ENCODE measurements at regions of chr3 and their contacts with region 1.

Region 1: GRCh38 chr3:112814266-112814665 is 32.4 kb downstream of the CD200R1L start:
- DNase-seq: no peak
- ATAC-seq: peak in 3 of 4 donors; percentile 40 to 55 (median 47)
- H3K4me3 ChIP-seq: no peak overlapping the region
- H3K27ac ChIP-seq: peak overlapping the region in 2 of 12 donors; percentile 62 to 81
- H3K4me1 ChIP-seq: peaks cover 0 to 49% (median 5%) of the 10 kb centered on the region in 12 donors
- H3K27me3 ChIP-seq: peaks cover 0 to 5% (median 0%) of the 10 kb centered on the region in 9 donors
- CTCF ChIP-seq: peak in 10 of 12 donors; percentile 13 to 60 (median 40)
- POLR2A ChIP-seq: no peak

Region 2: GRCh38 chr3:112464264-112464663 is 350.0 kb before region 1 on chr3:
- intact Hi-C with region 1: no loop called
- DNase-seq: no peak
- ATAC-seq: no peak
- H3K4me3 ChIP-seq: no peak overlapping the region
- H3K27ac ChIP-seq: peak overlapping the region in 1 of 12 donors; percentile 33
- H3K4me1 ChIP-seq: peaks cover 0 to 40% (median 0%) of the 10 kb centered on the region in 12 donors
- H3K27me3 ChIP-seq: no peaks in the 10 kb centered on the region
- CTCF ChIP-seq: no peak
- POLR2A ChIP-seq: no peak

Region 3: DNA sequence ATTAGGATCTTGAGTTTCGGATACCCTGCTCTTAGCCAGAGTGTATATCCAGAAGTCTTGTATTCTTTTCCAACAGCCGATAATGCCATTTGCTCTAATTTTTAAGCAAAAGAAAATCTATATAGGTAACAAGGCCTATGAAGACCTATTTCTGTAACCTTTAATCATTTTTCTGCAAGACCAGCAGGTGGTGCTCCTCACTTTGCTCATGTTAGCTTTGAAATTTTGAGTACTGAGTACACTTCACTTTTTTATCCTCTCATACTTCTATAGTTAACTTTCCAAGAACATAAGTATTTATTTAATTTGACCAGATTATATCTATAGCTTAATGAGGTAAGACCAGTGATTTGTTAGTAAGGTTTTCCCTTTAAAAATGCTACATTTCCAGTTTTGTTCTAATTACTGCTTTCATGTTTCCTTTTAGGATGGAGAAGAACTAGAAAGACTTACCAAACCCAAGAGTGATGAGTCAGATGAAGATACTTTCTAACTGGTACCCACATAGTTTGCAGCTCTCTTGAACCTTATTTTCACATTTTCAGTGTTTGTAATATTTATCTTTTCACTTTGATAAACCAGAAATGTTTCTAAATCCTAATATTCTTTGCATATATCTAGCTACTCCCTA is 231.9 kb before region 1 on chr3:
- intact Hi-C with region 1: loop called in 4 of 10 experiments (anchors 5 to 10 kb)
- DNase-seq: no peak
- ATAC-seq: peak in 1 of 4 donors; percentile 54
- H3K4me3 ChIP-seq: no peak overlapping the region
- H3K27ac ChIP-seq: no peak overlapping the region
- H3K4me1 ChIP-seq: peaks cover 0 to 16% (median 2%) of the 10 kb centered on the region in 12 donors
- H3K27me3 ChIP-seq: no peaks in the 10 kb centered on the region
- CTCF ChIP-seq: peak; percentile 26 to 75 (median 56)
- POLR2A ChIP-seq: no peak

Region 4: DNA sequence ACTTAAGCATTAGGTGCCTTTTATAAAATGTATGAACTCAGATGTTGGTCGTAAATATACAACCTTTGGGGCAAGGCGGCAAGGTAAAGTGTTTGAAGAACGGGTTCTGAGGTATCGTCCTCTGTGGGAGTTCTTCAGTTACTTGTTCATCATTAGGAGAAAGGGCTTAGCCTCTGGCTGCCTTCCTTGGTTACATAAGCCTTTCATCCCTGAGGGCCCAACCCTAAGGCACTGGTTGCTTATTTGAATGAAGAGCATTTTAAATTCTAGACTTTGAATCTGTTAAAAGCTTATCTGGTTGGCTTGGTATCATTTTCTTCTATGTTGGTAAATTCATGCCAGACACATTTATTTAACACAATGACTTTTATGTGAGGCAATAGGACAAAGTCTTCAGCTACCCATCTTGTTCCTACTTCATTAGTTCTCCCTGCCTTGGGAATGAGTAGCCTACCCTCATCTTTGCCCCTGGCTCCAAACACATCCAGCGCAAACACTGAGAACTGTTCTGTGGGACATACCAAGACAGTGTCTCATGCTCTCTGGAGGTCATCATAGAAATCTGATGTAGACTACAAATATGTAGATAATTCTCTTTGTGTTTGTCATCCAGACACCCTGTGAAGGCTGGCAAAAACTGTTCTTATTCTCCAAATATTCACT is 160.9 kb before region 1 on chr3:
- intact Hi-C with region 1: loop called in 1 of 10 experiments (anchors 5 kb)
- DNase-seq: peak in 3 of 5 donors; percentile 33 to 51 (median 50)
- ATAC-seq: peak; percentile 73 to 94 (median 82)
- H3K4me3 ChIP-seq: no peak overlapping the region
- H3K27ac ChIP-seq: peak overlapping the region in 11 of 12 donors; percentile 20 to 83 (median 49)
- H3K4me1 ChIP-seq: peaks cover 0 to 29% (median 0%) of the 10 kb centered on the region in 12 donors
- H3K27me3 ChIP-seq: no peaks in the 10 kb centered on the region
- CTCF ChIP-seq: no peak
- POLR2A ChIP-seq: no peak

Region 5: GRCh38 chr3:112734718-112735350 is 79.4 kb before region 1 on chr3:
- intact Hi-C with region 1: loop called in 8 of 10 experiments (anchors 5 to 10 kb)
- DNase-seq: peak; percentile 35 to 51 (median 48)
- ATAC-seq: peak in 3 of 4 donors; percentile 51 to 76 (median 69)
- H3K4me3 ChIP-seq: no peak overlapping the region
- H3K27ac ChIP-seq: no peak overlapping the region
- H3K4me1 ChIP-seq: peaks cover 0 to 18% (median 0%) of the 10 kb centered on the region in 12 donors
- H3K27me3 ChIP-seq: no peaks in the 10 kb centered on the region
- CTCF ChIP-seq: peak; percentile 50 to 74 (median 62)
- POLR2A ChIP-seq: no peak

Region 6: GRCh38 chr3:112873632-112874031 is 59.4 kb after region 1 on chr3:
- intact Hi-C with region 1: no loop called
- DNase-seq: no peak
- ATAC-seq: no peak
- H3K4me3 ChIP-seq: no peak overlapping the region
- H3K27ac ChIP-seq: no peak overlapping the region
- H3K4me1 ChIP-seq: peaks cover 0 to 13% (median 0%) of the 10 kb centered on the region in 12 donors
- H3K27me3 ChIP-seq: no peaks in the 10 kb centered on the region
- CTCF ChIP-seq: no peak
- POLR2A ChIP-seq: no peak

Region 7: DNA sequence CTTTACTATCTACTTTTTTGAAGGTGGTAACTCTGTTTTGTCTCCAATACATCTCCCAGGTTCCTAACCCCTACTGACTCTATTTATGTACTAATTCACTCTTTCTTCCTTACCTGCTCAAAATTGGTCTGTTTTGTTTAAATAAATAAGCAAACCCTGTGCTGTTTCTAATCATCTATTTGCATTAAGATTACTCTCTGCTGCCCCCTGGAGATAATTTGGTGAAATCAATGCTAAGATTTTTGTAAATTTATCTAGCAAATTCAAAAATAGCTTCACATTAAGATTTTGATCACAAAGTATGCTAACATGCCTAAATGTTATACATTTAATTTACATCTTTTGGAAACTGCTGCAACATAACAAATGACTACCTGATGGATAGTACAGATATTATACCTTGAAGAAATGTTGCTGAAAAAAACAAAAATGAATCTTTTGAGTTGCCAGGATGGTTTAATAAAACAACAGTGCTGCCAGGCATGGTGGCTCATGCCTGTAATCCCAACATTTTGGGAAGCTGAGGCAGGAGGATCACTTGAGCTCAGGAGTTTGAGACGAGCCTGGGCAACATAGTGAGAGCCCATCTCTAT is 165.1 kb after region 1 on chr3:
- intact Hi-C with region 1: loop called in 2 of 10 experiments (anchors 10 kb)
- DNase-seq: no peak
- ATAC-seq: no peak
- H3K4me3 ChIP-seq: no peak overlapping the region
- H3K27ac ChIP-seq: no peak overlapping the region
- H3K4me1 ChIP-seq: peaks cover 0 to 28% (median 0%) of the 10 kb centered on the region in 12 donors
- H3K27me3 ChIP-seq: no peaks in the 10 kb centered on the region
- CTCF ChIP-seq: peak; percentile 66 to 82 (median 73)
- POLR2A ChIP-seq: no peak

Measured in heart left ventricle (tissue), 16 donors.